ENCODE measurements at regions of chr11 and their contacts with region 1.

Region 1: GRCh38 chr11:47980245-47981049 is at the start of gene PTPRJ:
- DNase-seq: peak; percentile 74 to 89
- ATAC-seq: peak; percentile 67
- H3K4me3 ChIP-seq: peak within 1 kb of the TSS; percentile 89 to 97
- H3K27ac ChIP-seq: peak within 1 kb of the TSS in 1 of 2 donors; percentile 34
- H3K4me1 ChIP-seq: no peaks in the 10 kb centered on the region
- H3K27me3 ChIP-seq: no peaks in the 10 kb centered on the region
- total RNA-seq, gene PTPRJ: 14.3 to 20.1 TPM

Region 2: GRCh38 chr11:47667135-47667534 is 313.3 kb before region 1 on chr11:
- intact Hi-C with region 1: no loop called
- DNase-seq: no peak
- ATAC-seq: no peak
- H3K4me3 ChIP-seq: no peak overlapping the region
- H3K27ac ChIP-seq: no peak overlapping the region
- H3K4me1 ChIP-seq: no peaks in the 10 kb centered on the region
- H3K27me3 ChIP-seq: no peaks in the 10 kb centered on the region

Region 3: GRCh38 chr11:47797633-47798032 is 182.8 kb before region 1 on chr11:
- intact Hi-C with region 1: no loop called
- DNase-seq: no peak
- ATAC-seq: no peak
- H3K4me3 ChIP-seq: no peak overlapping the region
- H3K27ac ChIP-seq: no peak overlapping the region
- H3K4me1 ChIP-seq: peaks cover 0 to under 1% of the 10 kb centered on the region in 2 donors
- H3K27me3 ChIP-seq: no peaks in the 10 kb centered on the region

Region 4: GRCh38 chr11:47858169-47858543 is 122.3 kb before region 1 on chr11:
- intact Hi-C with region 1: loop called in 1 of 2 experiments (anchors 10 kb)
- DNase-seq: no peak
- ATAC-seq: peak; percentile 83
- H3K4me3 ChIP-seq: no peak overlapping the region
- H3K27ac ChIP-seq: no peak overlapping the region
- H3K4me1 ChIP-seq: no peaks in the 10 kb centered on the region
- H3K27me3 ChIP-seq: no peaks in the 10 kb centered on the region

Region 5: DNA sequence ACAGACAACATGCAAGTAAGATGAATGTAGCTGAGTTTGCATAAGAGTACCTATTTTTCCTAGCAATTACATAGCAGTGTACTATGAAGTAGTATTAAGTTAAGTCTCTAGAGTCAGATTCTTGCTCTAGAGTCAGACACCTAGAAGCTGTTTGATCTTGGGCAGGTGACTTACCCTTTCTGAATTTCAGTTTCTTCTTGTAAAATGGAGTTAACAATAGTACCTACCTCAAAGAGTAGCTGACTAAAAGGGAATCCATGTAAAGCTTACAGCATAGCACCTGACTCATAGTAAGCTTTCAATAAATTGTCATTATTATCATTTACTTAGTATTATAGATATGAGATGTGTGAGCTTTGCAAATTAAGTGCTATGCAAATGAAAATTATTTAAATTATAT is 47.9 kb before region 1 on chr11:
- intact Hi-C with region 1: loop called in 1 of 2 experiments (anchors 5 kb)
- DNase-seq: no peak
- ATAC-seq: no peak
- H3K4me3 ChIP-seq: no peak overlapping the region
- H3K27ac ChIP-seq: no peak overlapping the region
- H3K4me1 ChIP-seq: no peaks in the 10 kb centered on the region
- H3K27me3 ChIP-seq: no peaks in the 10 kb centered on the region

Region 6: GRCh38 chr11:48063424-48063978 is 83.1 kb after region 1 on chr11:
- intact Hi-C with region 1: loop called in 1 of 2 experiments (anchors 5 kb)
- DNase-seq: peak in 1 of 2 donors; percentile 58
- ATAC-seq: peak; percentile 80
- H3K4me3 ChIP-seq: no peak overlapping the region
- H3K27ac ChIP-seq: no peak overlapping the region
- H3K4me1 ChIP-seq: no peaks in the 10 kb centered on the region
- H3K27me3 ChIP-seq: no peaks in the 10 kb centered on the region

Region 7: DNA sequence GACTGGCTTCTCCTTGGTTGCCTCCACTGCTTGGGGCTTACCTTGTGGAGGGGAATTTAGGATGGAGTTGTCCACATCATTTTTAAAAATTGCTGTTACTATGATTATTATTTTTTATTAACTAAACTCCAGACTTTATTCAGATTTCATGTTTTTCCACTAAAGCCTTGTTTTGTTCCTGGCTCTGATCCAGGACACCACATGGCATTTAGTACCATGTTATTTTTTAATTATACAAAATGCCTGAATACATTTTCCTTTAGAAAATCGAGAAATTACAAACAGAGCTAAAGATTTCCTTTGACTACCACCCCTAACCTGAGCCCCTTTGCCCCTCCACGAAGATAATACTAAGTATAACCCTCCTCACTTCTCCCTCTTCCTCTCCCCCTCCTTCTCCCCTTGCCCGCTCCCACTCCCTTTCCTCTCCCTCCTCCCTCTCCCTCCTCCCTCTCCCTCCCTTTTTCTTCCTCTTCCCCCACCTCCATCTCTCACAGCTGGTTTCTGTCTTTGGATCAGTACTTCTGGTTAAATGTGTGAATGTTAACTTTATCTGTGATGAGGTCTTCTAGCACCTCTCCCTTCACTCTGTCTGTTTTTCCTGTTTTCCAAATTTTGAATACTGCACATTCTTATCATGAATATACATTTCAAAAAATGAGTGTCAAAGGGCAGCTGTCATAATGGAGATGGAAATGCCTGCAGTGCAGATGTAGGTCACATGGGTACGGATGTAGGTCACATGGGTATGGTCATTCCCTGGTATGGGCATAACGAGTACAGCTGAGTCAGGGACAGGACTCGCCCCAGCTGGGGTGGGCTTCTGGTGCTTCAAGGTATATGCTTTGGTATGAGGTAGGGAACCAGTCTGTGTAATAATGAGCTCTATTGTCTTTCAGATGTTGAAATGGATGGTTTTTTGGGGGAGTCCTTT is 181.8 kb after region 1 on chr11:
- intact Hi-C with region 1: no loop called
- DNase-seq: no peak
- ATAC-seq: no peak
- H3K4me3 ChIP-seq: no peak overlapping the region
- H3K27ac ChIP-seq: no peak overlapping the region
- H3K4me1 ChIP-seq: no peaks in the 10 kb centered on the region
- H3K27me3 ChIP-seq: no peaks in the 10 kb centered on the region

Measured in aorta (tissue), 5 donors.